T-cell (primary cell): ENCODE measurements at regions of chr7 and their contacts with region 1.

Region 1: GRCh38 chr7:127812540-127812939 is 160.5 kb downstream of the SND1 start:
- DNase-seq: no peak
- ATAC-seq: no peak
- H3K4me3 ChIP-seq: no peak overlapping the region
- H3K4me3 Mint-ChIP-seq: no peak overlapping the region
- H3K27ac ChIP-seq: no peak overlapping the region
- H3K27ac Mint-ChIP-seq: no peak overlapping the region
- H3K4me1 ChIP-seq: no peaks in the 10 kb centered on the region
- H3K4me1 Mint-ChIP-seq: peaks cover 41 to 53% (median 47%) of the 10 kb centered on the region in 3 donors
- H3K27me3 ChIP-seq: no peaks in the 10 kb centered on the region
- H3K27me3 Mint-ChIP-seq: no peaks in the 10 kb centered on the region

Region 2: GRCh38 chr7:127792528-127793342 is 19.8 kb before region 1 on chr7:
- CTCF ChIA-PET with region 1: interaction called, 4 to 10 read pairs
- POLR2A ChIA-PET with region 1: interaction called in 1 of 2 experiments, 4 read pairs
- DNase-seq: peak in 24 of 35 experiments; percentile 0 to 45 (median 12)
- ATAC-seq: peak in 1 of 4 experiments; percentile 19
- H3K4me3 ChIP-seq: no peak overlapping the region
- H3K4me3 Mint-ChIP-seq: no peak overlapping the region
- H3K27ac ChIP-seq: no peak overlapping the region
- H3K27ac Mint-ChIP-seq: no peak overlapping the region
- H3K4me1 ChIP-seq: peaks cover 0 to 4% of the 10 kb centered on the region in 2 experiments
- H3K4me1 Mint-ChIP-seq: peaks cover 40 to 58% (median 52%) of the 10 kb centered on the region in 3 donors
- H3K27me3 ChIP-seq: no peaks in the 10 kb centered on the region
- H3K27me3 Mint-ChIP-seq: no peaks in the 10 kb centered on the region